WTC11 (cell line): ENCODE measurements at regions of chr4 and their contacts with region 1.

Region 1: DNA sequence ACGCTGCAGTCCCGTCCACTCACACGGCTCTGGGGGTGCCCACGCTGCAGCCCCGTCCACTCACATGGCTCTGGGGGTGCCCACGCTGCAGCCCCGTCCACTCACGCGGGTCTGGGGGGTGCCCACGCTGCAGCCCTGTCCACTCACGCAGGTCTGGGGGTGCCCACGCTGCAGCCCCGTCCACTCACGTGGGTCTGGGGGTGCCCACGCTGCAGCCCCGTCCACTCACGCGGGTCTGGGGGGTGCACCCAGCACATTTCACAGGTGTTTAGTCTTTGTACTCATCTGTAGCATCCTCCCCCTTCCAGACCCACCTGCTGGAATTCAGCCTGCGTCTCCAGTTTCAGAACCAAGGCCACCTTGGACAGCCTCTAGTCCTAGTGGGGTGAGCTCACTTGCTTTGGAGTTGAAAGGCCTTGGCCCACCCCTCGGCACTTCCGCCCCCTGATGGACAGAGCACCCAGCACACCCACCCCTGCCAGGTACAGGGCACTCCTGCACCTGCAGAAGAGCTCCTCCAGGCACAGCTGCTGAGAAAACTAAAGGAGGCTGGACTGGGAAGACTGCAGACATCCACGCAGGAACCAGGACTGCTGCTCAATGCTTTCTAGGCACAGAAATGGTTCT is 73.0 kb downstream of the ABLIM2 start:
- DNase-seq: peak; percentile 55
- ATAC-seq: peak; percentile 81
- H3K4me3 Mint-ChIP-seq: no peak overlapping the region
- H3K27ac Mint-ChIP-seq: peak overlapping the region; percentile 83
- H3K4me1 Mint-ChIP-seq: peaks cover 24% of the 10 kb centered on the region
- H3K27me3 Mint-ChIP-seq: no peaks in the 10 kb centered on the region
- CTCF ChIP-seq: no peak

Region 2: DNA sequence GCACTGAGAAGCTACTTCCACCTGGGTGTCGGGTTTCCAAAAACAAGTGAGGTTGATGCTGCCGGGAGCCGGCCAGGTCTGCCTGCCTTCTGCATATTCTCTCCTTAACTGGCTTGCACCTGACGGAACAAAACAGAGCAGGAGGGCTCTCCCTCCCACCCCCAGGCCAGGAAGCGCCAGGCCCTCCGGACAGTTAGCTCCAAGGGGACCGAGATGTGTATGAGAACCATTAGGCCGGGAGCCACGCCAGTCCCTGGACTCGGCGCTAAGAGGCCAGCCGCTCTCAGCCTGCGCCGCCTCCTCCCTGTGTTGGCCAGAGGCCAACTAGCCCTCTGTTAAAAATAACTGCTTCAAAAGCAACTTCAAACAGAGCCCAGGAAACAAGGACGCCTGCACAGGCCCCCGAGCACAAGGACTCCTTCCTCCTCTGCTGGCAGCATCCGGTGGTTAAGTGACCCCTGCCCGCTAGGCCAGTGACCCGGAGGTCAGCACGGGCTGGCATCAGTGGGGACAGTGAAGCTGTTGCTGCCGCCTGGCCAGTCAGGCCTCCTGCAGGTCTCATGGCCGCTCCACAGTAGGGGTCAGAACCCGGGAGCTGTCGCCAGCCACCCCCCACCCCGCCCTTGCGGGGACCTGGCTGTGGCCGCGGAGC is 34.9 kb before region 1 on chr4:
- CTCF ChIA-PET with region 1: interaction called, 32 read pairs
- POLR2A ChIA-PET with region 1: interaction called, 8 read pairs
- DNase-seq: peak; percentile 81
- ATAC-seq: peak; percentile 73
- H3K4me3 Mint-ChIP-seq: peak overlapping the region; percentile 43; the same call in 1 of the 2 replicates
- H3K27ac Mint-ChIP-seq: peak overlapping the region; percentile 99
- H3K4me1 Mint-ChIP-seq: peaks cover 53% of the 10 kb centered on the region
- H3K27me3 Mint-ChIP-seq: peaks cover 4% of the 10 kb centered on the region; the same call in 1 of the 2 replicates
- CTCF ChIP-seq: no peak

Region 3: DNA sequence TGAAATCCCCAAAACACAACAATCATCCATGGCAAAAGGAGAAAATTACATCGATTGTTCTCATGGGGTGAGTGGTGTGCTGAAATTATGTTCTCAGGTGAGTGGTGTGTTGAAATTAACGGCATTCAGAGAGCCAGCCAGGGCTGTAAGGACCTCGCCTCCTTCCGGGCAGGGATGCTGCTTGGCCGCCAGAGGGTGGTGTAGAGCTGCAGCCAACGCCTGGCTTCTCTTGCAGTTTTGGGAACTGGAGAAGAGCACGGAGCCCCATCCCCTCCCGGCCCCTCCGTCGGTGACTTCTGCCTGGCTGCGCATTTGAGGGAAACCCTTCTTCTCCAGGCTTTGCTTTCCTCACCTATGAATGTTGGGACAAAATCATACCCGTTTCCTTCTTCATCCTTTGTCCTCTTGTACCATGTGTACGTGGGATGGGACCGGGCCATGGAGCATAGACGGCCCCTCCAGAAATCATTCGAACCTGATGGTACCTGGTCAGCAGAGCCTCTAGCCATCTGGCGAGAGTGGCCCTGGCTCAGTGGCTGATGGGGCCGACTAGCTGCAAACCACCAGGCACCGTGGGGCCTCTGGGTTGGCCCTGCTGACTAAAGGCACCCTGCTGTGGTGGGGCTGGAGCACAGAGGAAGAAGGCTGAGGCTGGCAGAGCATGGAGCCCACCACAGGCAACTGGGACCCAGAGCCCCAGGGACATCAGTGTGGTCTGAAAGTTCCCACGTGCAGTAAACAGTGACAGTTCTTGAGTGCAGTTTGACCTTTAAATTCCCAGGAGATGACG is 383.3 kb after region 1 on chr4:
- CTCF ChIA-PET with region 1: no interaction called
- POLR2A ChIA-PET with region 1: no interaction called
- DNase-seq: peak; percentile 89
- ATAC-seq: peak; percentile 94
- H3K4me3 Mint-ChIP-seq: no peak overlapping the region
- H3K27ac Mint-ChIP-seq: 0 out of 2 replicates have a peak overlapping the region, but pooled peaks have one; percentile 24
- H3K4me1 Mint-ChIP-seq: 0 out of 2 replicates have a peak, but pooled peaks cover 2% of the 10 kb centered on the region
- H3K27me3 Mint-ChIP-seq: no peaks in the 10 kb centered on the region
- CTCF ChIP-seq: peak; percentile 76